GM23248 (cell line): ENCODE measurements at regions of chr2 and their contacts with region 1.

Region 1: GRCh38 chr2:99066075-99066958 is 75.2 kb upstream of the C2orf15 start:
- DNase-seq: peak; percentile 70
- H3K4me3 ChIP-seq: no peak overlapping the region
- H3K27ac ChIP-seq: no peak overlapping the region
- H3K4me1 ChIP-seq: no peaks in the 10 kb centered on the region
- H3K27me3 ChIP-seq: 0 out of 2 replicates have a peak, but pooled peaks cover 13% of the 10 kb centered on the region

Region 2: DNA sequence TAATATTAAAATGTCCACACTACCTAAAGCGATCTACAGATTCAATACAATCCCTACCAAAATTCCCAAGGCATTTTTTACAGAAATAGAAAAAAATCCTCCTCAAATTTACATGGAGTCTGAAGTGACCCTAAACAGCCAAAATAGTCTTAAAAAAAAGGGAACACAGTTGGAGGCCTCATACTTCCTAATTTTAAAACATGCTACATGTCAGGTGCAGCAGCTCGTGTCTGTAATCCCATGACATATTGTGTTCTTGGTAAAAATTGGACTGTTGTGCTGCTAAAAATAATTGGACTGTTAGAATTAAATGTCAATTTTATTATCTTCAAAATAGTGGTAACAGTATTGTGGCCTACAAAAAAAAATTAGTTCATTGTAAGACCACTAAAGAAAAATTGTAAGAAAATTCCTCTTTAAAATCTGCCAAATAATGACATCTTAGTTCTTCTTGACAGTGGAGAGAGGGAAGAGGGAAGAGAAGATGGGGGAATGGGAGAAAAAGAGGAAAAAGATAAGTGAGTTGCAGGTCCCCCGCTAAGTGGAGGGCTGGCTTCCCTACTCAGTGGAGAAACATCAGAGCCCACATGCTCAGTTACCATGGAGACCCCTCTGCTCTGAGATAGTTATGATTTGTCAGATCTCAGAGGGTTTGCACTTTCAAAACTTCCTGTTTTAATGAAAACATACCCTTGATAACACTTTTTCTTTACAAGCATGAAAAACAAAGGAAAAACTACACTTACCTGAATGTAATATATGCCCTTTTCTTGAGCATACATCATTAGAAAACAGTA is 411.4 kb before region 1 on chr2:
- in situ Hi-C with region 1: loop called (anchors 10 kb)
- DNase-seq: no peak
- H3K4me3 ChIP-seq: no peak overlapping the region
- H3K27ac ChIP-seq: no peak overlapping the region
- H3K4me1 ChIP-seq: no peaks in the 10 kb centered on the region
- H3K27me3 ChIP-seq: no peaks in the 10 kb centered on the region

Region 3: DNA sequence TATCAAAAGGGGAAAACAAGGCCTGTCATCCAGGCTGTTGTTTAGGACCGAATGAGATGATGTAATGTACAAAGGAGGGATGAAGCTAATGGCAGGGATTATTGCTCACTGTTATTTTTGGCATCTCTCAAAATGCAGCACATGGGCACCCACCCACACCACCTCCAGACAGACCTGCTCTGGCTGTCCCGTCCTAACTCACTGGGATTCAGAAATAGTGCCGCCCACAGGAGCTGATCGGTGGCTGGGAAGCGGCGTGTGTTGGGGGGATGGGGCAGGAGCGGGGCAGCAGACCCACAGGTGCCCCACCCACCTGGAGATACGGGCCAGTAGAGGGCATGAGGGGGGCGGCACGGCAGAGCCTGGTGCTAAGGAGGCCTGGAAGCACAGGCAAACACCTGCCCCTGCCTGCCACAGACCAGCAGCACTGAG is 182.5 kb before region 1 on chr2:
- in situ Hi-C with region 1: no loop called
- DNase-seq: no peak
- H3K4me3 ChIP-seq: no peak overlapping the region
- H3K27ac ChIP-seq: no peak overlapping the region
- H3K4me1 ChIP-seq: no peaks in the 10 kb centered on the region
- H3K27me3 ChIP-seq: peaks cover 14% of the 10 kb centered on the region